Ascending aorta (tissue), 2 donors: ENCODE measurements at regions of chr15 and their contacts with region 1.

Region 1: DNA sequence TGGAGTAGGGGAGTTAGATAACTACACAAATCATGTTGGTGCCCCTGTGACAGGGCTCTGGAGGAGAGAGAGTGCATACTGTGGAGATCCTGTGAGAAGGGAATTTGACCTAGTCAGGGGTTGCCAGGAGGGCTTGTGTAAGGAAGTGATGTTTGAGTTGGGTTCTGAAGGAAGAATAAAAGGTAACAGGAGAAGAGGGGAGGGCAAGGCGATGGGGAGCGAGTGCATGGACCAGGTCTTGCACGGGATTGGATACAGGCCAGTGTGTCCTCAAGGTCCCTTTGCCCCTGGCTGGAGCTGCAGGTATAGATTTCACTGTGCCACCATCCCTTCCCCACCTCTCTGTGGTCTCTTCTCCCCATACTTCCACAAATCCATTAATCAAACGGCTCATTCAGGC is 83.9 kb downstream of the RGMA start:
- DNase-seq: no peak
- H3K4me3 ChIP-seq: no peak overlapping the region
- H3K27ac ChIP-seq: peak overlapping the region in 1 of 2 donors; percentile 2
- H3K4me1 ChIP-seq: no peaks in the 10 kb centered on the region
- H3K27me3 ChIP-seq: no peaks in the 10 kb centered on the region
- CTCF ChIP-seq: no peak

Region 2: GRCh38 chr15:92942706-92943105 is 62.4 kb before region 1 on chr15:
- intact Hi-C with region 1: loop called (anchors 5 kb)
- DNase-seq: no peak
- H3K4me3 ChIP-seq: no peak overlapping the region
- H3K27ac ChIP-seq: no peak overlapping the region
- H3K4me1 ChIP-seq: no peaks in the 10 kb centered on the region
- H3K27me3 ChIP-seq: no peaks in the 10 kb centered on the region
- CTCF ChIP-seq: no peak

Region 3: GRCh38 chr15:93072411-93073394 is 67.6 kb after region 1 on chr15:
- intact Hi-C with region 1: no loop called
- DNase-seq: peak in 1 of 2 donors; percentile 88
- H3K4me3 ChIP-seq: peak overlapping the region; percentile 81 to 91
- H3K27ac ChIP-seq: peak overlapping the region; percentile 84 to 86
- H3K4me1 ChIP-seq: peaks cover 2 to 21% of the 10 kb centered on the region in 2 donors
- H3K27me3 ChIP-seq: no peaks in the 10 kb centered on the region
- CTCF ChIP-seq: peak in 1 of 3 experiments; percentile 4